AG04449 (cell line): ENCODE measurements at regions of chr9 and their contacts with region 1.

Region 1: DNA sequence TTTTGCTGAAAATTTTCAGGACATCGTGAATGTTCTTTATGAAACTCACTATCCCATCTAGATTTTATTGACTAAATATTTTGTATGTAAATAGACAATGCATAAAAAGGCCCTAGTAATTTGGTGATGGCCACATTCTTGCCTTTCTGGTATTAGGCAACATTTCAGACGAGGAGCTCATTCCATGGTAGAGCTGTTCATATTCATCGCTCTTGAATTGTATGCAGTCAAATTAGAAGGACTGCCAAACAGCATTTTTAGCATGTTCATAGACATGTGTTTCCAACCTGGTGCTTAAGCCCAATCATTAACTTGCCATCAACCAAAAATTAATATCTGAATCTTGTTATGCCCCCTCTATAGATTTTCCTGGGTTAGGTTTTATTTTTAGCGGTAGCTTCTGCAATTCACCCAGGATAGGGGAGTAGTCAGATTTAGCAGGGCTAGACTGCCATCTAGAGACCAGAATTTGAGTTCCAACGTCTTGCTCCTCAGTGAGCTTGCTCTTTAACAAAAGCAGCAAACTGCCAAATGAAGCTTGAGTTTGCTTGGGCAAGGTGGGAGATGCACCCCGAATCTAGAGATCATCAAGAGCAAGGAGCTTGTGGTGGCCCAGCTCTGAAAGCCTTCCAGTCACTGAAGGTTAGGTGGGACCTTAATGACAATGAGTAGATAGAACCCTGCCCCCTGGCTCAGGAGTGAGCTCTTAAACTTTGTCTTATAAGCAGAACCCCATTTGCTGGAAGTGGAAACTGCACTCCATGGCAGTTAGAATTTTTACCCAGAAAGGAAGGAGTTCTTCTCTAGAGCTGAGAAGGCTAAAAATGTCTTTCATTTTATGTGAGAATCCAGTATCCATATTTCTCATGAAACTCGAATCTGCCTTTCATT is 456.2 kb downstream of the RASEF start:
- DNase-seq: peak; percentile 24
- H3K4me3 ChIP-seq: no peak overlapping the region
- CTCF ChIP-seq: peak; percentile 61

Region 2: GRCh38 chr9:81689343-81690190 is 917.2 kb before region 1 on chr9 and contains the start of gene TLE1:
- CTCF ChIA-PET with region 1: interaction called, 13 read pairs
- POLR2A ChIA-PET with region 1: no interaction called
- DNase-seq: peak; percentile 95
- H3K4me3 ChIP-seq: peak within 1 kb of the TSS; percentile 62
- CTCF ChIP-seq: no peak

Region 3: GRCh38 chr9:82560457-82560904 is 46.3 kb before region 1 on chr9:
- CTCF ChIA-PET with region 1: no interaction called
- POLR2A ChIA-PET with region 1: no interaction called
- DNase-seq: no peak
- H3K4me3 ChIP-seq: no peak overlapping the region
- CTCF ChIP-seq: no peak

Region 4: GRCh38 chr9:82590845-82591244 is 15.9 kb before region 1 on chr9:
- CTCF ChIA-PET with region 1: interaction called, 19 read pairs
- POLR2A ChIA-PET with region 1: no interaction called
- DNase-seq: no peak
- H3K4me3 ChIP-seq: no peak overlapping the region
- CTCF ChIP-seq: no peak